K562 (cell line): ENCODE measurements at regions of chr1 and their contacts with region 1.

Region 1: DNA sequence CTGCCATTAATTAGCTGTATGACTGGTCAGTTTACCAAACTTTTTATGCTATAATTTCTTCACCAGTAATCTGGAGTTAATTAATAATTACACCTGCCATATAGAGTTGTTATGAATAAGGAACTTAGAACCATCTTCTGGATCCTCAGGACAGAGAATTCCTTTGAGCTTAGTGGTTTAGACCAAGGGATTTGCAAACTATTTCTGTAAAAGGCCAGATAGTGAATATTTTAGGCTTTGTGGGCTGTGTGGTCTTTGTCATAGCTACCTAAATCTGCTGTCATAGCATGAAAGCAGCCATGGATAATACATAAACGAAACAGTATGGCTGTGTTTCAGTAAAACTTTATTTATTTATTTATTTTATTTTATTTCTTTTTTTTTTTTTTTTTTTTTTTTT is 9.0 kb downstream of the TIMM17A start:
- DNase-seq: no peak
- ATAC-seq: no peak
- H3K4me3 ChIP-seq: no peak overlapping the region
- H3K27ac ChIP-seq: no peak overlapping the region
- H3K4me1 ChIP-seq: no peaks in the 10 kb centered on the region; a peak in 1 of 5 replicates
- H3K27me3 ChIP-seq: no peaks in the 10 kb centered on the region
- CTCF ChIP-seq: no peak
- EP300 ChIP-seq: no peak
- POLR2A ChIP-seq: no peak
- RAD21 ChIP-seq: no peak

Region 2: DNA sequence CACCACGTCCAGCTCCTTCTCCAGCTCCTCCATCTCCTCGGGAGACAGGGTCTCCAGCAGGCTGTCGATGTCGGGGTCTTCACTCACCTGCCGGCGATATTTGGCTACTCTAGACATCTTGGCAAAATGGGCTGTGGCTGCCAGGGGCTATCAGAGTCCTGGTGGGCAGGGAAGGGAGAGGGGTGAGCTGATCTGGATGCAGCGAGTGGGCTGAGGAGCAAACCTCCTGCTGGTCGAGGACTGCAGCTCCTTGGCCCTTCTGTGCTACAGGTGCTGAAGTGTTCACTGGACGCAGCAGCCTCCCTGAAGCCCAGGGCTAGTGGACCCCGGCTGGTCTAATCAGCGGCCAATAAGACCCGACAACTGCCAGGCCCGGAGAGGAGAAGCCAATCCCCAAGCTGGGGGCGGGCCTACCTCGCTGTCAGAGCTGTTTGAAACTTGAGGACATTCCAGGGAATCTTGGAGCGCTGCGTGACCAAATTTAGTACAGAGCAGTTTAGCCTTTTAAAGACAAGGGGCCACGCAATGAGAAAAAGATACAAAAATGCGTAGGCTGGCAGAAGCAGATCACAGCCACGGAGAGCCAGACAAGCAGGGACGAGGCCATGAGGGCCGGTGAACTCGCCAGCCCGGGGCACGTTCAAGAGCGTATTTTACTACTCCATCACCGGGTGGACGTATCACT is 17.9 kb before region 1 on chr1 and contains the start of gene LMOD1:
- CTCF ChIA-PET with region 1: no interaction called
- POLR2A ChIA-PET with region 1: interaction called, 11 read pairs
- in situ Hi-C with region 1: no loop called
- intact Hi-C with region 1: no loop called
- DNase-seq: peak; percentile 63 to 89 (median 77)
- ATAC-seq: peak; percentile 84
- H3K4me3 ChIP-seq: peak within 1 kb of the TSS; percentile 12
- H3K27ac ChIP-seq: no peak within 1 kb of the TSS; the same call in 2 of the 3 replicates
- H3K4me1 ChIP-seq: peaks cover 27 to 36% of the 10 kb centered on the region in 2 experiments
- H3K27me3 ChIP-seq: no peaks in the 10 kb centered on the region
- CTCF ChIP-seq: no peak
- EP300 ChIP-seq: no peak
- POLR2A ChIP-seq: peak; percentile 37; the same call in 1 of the 2 replicates
- RAD21 ChIP-seq: 0 out of 4 replicates have a peak, but pooled peaks of 1 of the 2 experiments have one; percentile 3
- polyA plus RNA-seq, gene LMOD1: 0.03 TPM in 1 of 2 experiments, not detected in the other

Region 3: GRCh38 chr1:201982623-201983379 is 18.5 kb after region 1 on chr1 and contains the start of gene RNPEP:
- CTCF ChIA-PET with region 1: no interaction called
- POLR2A ChIA-PET with region 1: interaction called, 15 read pairs
- in situ Hi-C with region 1: no loop called
- intact Hi-C with region 1: no loop called
- DNase-seq: peak; percentile 82 to 89 (median 84)
- ATAC-seq: peak; percentile 92
- H3K4me3 ChIP-seq: peak within 1 kb of the TSS; percentile 99
- H3K27ac ChIP-seq: peak within 1 kb of the TSS; percentile 91
- H3K4me1 ChIP-seq: peaks cover 9 to 19% of the 10 kb centered on the region in 2 experiments; a peak in 4 of 5 replicates
- H3K27me3 ChIP-seq: no peaks in the 10 kb centered on the region
- CTCF ChIP-seq: peak; percentile 16 to 39 (median 35); a peak in 4 of 6 replicates
- EP300 ChIP-seq: 0 out of 2 replicates have a peak, but pooled peaks have one; percentile 4
- POLR2A ChIP-seq: peak; percentile 84
- RAD21 ChIP-seq: no peak
- polyA plus RNA-seq, gene RNPEP: 27.5 to 35.1 TPM